Activated CD8-positive, alpha-beta memory T cell treated with anti-CD3 and anti-CD28 coated beads, Interleukin-2, amount 10 ng/mL, durations not matched to agents 7 days and 5 days (primary cell): ENCODE measurements at regions of chr14 and their contacts with region 1.

Region 1: GRCh38 chr14:67426983-67427606 is 15.1 kb upstream of the PLEK2 start:
- DNase-seq: peak; percentile 80
- ATAC-seq: peak; percentile 89
- H3K4me3 Mint-ChIP-seq: no peak overlapping the region
- H3K27ac Mint-ChIP-seq: no peak overlapping the region
- H3K4me1 Mint-ChIP-seq: peaks cover 9% of the 10 kb centered on the region
- H3K27me3 Mint-ChIP-seq: peaks cover 34% of the 10 kb centered on the region

Region 2: DNA sequence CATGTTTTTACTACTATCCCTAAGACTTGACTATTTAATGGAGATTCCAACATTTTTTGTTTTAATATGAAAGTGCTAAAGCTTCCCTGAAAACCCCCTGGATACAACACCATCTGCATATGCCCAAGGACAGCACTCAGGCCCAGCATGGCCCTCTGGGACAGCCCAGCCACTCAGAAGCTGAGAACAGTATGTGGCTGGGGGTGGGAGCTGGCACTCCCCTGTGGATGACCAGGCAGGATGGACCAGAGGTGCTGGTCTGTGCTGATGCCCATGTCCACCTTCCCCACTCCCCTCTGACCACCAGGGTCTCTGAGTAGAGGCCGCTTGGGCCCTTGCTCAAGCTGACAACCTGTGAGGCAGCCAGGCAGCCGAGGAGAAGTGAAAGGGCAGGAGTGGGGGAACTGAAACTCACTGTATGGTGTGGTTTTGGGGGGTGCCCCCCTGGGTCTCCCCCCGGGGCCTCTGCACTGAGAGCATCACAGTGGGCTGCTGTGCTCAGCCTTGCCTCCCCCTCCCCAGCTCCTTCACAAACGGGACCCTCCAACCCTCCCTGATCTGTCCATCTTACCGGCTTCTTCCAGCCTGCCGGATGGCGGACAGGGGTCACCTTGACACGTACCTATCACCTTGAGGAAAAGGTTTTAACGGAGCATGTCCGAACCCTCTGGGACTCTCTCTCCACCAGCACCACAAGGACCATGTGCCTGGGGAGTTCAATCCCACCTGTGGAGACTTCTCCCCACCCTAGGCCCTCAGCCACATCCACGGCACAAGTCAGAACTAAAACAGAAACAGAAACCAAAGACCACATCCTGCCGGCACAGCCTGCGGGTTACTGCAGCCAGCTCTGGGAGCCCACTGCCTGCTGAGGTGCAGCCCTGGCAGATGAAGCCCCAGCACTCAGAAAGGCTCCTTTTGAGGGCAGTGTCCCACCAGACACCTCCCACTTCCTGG is 61.1 kb after region 1 on chr14 and contains the start of gene TMEM229B:
- CTCF ChIA-PET with region 1: interaction called, 13 read pairs
- DNase-seq: peak; percentile 95
- ATAC-seq: peak; percentile 98
- H3K4me3 Mint-ChIP-seq: peak within 1 kb of the TSS; percentile 73
- H3K27ac Mint-ChIP-seq: peak within 1 kb of the TSS; percentile 89
- H3K4me1 Mint-ChIP-seq: peaks cover 39% of the 10 kb centered on the region
- H3K27me3 Mint-ChIP-seq: peaks cover 12% of the 10 kb centered on the region
- total RNA-seq, gene TMEM229B: 5.1 to 7.0 TPM

Region 3: DNA sequence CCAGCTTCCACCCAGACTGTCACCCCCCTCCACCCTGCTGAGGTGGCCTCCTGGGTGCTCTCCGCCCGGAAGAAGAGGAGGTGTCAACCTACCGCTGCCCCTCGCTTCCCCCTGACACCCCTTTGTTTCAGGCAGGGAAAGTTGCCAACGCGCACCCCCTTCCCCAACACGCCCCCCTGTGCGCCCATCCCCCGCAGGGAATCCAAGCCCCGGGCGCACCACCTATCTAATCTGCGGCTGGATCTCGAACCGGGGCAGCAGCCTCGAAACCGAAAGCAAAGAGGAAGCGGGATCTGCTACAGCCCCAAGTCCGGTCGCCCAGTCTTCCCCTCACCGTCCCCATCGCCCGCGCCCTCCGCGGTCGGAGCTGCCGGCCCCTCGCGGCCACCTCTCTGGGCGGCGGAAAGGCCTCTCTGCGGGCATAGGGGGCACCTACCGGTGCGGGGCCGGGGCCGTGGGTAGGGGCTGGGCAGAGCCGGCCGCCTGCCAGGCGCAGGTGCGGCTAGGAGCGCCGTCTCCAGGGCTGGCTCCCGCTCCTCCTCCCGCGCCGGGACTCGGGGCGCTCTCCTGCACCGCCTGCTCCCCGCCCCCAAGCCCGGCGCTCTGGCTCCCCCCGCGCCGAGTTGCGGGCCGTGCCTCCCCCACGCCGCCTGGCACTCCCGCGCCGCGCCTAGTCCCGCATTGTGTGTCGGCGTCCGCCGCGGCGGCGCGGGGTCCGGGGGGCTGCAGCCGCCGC is 87.7 kb after region 1 on chr14:
- CTCF ChIA-PET with region 1: interaction called, 13 read pairs
- DNase-seq: peak; percentile 65
- ATAC-seq: peak; percentile 74
- H3K4me3 Mint-ChIP-seq: peak overlapping the region; percentile 76
- H3K27ac Mint-ChIP-seq: peak overlapping the region; percentile 71
- H3K4me1 Mint-ChIP-seq: peaks cover 15% of the 10 kb centered on the region
- H3K27me3 Mint-ChIP-seq: peaks cover 56% of the 10 kb centered on the region

Region 4: DNA sequence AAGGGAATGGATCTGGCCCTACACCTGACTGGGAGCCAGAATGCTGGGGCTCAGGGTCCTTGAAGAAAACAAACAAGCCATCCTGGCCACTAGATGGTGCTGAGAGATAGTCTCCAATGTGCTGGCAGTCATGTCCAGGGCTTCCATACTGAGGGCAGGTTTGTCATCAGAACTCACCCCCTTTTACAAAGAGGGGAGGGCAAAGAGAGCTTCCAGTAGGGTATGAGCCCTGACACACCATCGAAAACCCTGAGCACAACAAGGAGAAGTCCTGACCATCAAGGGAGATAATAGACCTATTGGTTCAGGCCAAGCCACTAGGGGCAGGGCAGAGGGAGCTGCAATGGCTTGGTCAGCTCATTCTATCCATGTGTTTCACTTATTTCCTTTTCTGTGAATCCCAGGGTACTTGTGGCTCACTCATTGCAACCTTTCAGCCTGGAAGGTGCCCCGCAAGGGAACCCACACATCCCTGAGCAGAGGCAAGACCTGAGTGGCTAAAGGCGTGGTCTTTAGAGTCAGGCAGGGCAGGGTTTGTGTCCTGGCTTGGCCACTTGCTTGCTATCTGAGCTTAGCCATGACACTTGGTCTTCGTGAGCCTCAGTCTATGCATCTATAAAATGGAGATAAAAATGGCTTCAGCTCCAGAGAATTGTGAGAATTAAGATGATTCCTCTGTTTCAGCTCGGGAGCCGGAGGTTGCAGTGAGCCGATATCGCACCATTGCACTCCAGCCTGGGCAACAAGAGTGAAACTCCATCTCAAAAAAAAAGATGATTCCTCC is 99.8 kb after region 1 on chr14:
- CTCF ChIA-PET with region 1: interaction called, 32 read pairs
- DNase-seq: peak; percentile 58
- ATAC-seq: peak; percentile 90
- H3K4me3 Mint-ChIP-seq: no peak overlapping the region
- H3K27ac Mint-ChIP-seq: no peak overlapping the region
- H3K4me1 Mint-ChIP-seq: no peaks in the 10 kb centered on the region
- H3K27me3 Mint-ChIP-seq: peaks cover 73% of the 10 kb centered on the region

Region 5: GRCh38 chr14:67583711-67584644 is 156.9 kb after region 1 on chr14:
- CTCF ChIA-PET with region 1: interaction called, 12 read pairs
- DNase-seq: peak; percentile 50
- ATAC-seq: peak; percentile 78
- H3K4me3 Mint-ChIP-seq: no peak overlapping the region
- H3K27ac Mint-ChIP-seq: no peak overlapping the region
- H3K4me1 Mint-ChIP-seq: peaks cover 12% of the 10 kb centered on the region
- H3K27me3 Mint-ChIP-seq: no peaks in the 10 kb centered on the region

Region 6: DNA sequence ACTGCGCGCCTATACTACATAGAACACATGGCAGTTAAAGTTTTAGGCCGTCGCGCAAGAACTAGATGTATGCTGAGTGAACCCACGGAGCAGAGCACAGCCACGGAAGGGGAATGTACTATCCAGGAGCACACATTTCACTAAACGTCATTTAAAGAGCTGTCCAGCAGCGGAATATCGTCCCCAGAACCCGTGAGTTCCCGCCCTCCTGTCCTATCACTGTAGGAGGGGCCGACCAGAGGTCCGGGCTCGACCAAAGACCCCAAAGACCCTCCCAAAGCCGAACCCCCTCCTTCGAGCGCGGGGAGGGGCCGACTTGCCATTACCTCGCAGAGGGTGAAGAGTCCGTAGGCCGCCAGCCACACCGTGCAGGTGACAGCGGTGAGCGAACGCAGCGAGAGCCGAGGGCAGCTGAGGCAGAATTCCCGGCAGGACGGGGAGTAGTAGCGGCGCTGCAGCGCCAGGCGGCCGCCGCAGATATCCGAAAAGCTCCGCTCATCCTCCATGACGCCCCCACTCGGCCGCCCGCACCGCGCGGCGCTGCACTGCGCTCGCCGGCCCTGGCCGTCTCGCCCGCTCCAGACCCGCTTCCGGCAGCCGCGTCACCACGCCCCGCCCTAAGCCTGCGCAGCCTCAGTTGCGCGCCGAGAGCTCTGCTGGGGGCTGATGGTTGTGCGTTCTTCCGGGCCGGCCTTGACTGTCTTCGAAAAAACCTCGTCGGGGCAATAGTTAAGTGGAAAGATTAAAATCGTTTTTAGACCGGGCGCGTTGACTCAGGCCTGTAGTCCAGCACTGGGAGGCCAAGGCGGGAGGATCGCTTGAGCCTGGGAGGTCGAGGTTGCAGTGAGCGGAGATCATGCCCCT is 172.8 kb after region 1 on chr14 and contains the start of gene PIGH:
- CTCF ChIA-PET with region 1: interaction called, 17 read pairs
- DNase-seq: peak; percentile 96
- ATAC-seq: peak; percentile 99
- H3K4me3 Mint-ChIP-seq: peak within 1 kb of the TSS; percentile 91
- H3K27ac Mint-ChIP-seq: peak within 1 kb of the TSS; percentile 89
- H3K4me1 Mint-ChIP-seq: peaks cover 29% of the 10 kb centered on the region
- H3K27me3 Mint-ChIP-seq: peaks cover 7% of the 10 kb centered on the region
- total RNA-seq, gene PIGH: 16.3 to 17.1 TPM

Region 7: GRCh38 chr14:67883717-67884116 is 456.6 kb after region 1 on chr14:
- CTCF ChIA-PET with region 1: no interaction called
- DNase-seq: no peak
- ATAC-seq: no peak
- H3K4me3 Mint-ChIP-seq: no peak overlapping the region
- H3K27ac Mint-ChIP-seq: no peak overlapping the region
- H3K4me1 Mint-ChIP-seq: peaks cover 31% of the 10 kb centered on the region
- H3K27me3 Mint-ChIP-seq: no peaks in the 10 kb centered on the region